ENCODE measurements at regions of chr4 and their contacts with region 1.

Region 1: GRCh38 chr4:40246011-40246900 is 49.4 kb downstream of the RHOH start:
- DNase-seq: peak; percentile 36
- ATAC-seq: peak; percentile 87
- H3K4me3 Mint-ChIP-seq: no peak overlapping the region
- H3K27ac Mint-ChIP-seq: peak overlapping the region; percentile 69; the same call in 1 of the 2 replicates
- H3K4me1 Mint-ChIP-seq: peaks cover 5% of the 10 kb centered on the region; the same call in 1 of the 2 replicates
- H3K27me3 Mint-ChIP-seq: no peaks in the 10 kb centered on the region
- CTCF ChIP-seq: no peak

Region 2: GRCh38 chr4:40114206-40114605 is 132.1 kb before region 1 on chr4:
- CTCF ChIA-PET with region 1: no interaction called
- POLR2A ChIA-PET with region 1: no interaction called
- DNase-seq: no peak
- ATAC-seq: no peak
- H3K4me3 Mint-ChIP-seq: no peak overlapping the region
- H3K27ac Mint-ChIP-seq: no peak overlapping the region
- H3K4me1 Mint-ChIP-seq: peaks cover 9% of the 10 kb centered on the region
- H3K27me3 Mint-ChIP-seq: no peaks in the 10 kb centered on the region
- CTCF ChIP-seq: no peak

Region 3: GRCh38 chr4:40228497-40229365 is 17.5 kb before region 1 on chr4:
- CTCF ChIA-PET with region 1: interaction called, 10 read pairs
- POLR2A ChIA-PET with region 1: no interaction called
- DNase-seq: peak; percentile 52
- ATAC-seq: peak; percentile 86
- H3K4me3 Mint-ChIP-seq: no peak overlapping the region
- H3K27ac Mint-ChIP-seq: 0 out of 2 replicates have a peak overlapping the region, but pooled peaks have one; percentile 19
- H3K4me1 Mint-ChIP-seq: peaks cover 28% of the 10 kb centered on the region
- H3K27me3 Mint-ChIP-seq: no peaks in the 10 kb centered on the region
- CTCF ChIP-seq: peak; percentile 44; the same call in 1 of the 2 replicates

Region 4: DNA sequence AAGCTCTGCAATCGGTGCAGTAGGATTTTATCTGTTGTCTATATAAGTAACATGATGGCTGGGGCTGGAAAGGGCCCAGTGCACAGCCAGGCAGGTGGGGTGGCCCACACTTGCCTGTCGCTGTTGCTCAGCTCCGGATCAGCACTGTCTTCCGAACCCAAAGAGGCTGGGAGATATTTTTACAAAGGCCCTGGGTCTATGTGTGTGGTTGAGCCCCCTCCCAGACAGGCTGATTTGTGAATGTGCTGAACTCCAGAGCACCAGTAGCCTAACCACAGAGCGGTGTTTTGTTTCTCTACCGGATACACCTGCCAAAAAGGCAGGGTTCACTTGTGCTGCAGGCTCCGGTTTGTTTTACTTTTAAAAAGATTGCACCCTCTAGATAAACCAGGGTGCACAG is 55.3 kb after region 1 on chr4:
- CTCF ChIA-PET with region 1: no interaction called
- POLR2A ChIA-PET with region 1: no interaction called
- DNase-seq: no peak
- ATAC-seq: no peak
- H3K4me3 Mint-ChIP-seq: no peak overlapping the region
- H3K27ac Mint-ChIP-seq: no peak overlapping the region
- H3K4me1 Mint-ChIP-seq: peaks cover 23% of the 10 kb centered on the region
- H3K27me3 Mint-ChIP-seq: peaks cover 6% of the 10 kb centered on the region; the same call in 1 of the 2 replicates
- CTCF ChIP-seq: no peak